Lower leg skin (tissue), 4 donors: ENCODE measurements at regions of chr10 and their contacts with region 1.

Region 1: DNA sequence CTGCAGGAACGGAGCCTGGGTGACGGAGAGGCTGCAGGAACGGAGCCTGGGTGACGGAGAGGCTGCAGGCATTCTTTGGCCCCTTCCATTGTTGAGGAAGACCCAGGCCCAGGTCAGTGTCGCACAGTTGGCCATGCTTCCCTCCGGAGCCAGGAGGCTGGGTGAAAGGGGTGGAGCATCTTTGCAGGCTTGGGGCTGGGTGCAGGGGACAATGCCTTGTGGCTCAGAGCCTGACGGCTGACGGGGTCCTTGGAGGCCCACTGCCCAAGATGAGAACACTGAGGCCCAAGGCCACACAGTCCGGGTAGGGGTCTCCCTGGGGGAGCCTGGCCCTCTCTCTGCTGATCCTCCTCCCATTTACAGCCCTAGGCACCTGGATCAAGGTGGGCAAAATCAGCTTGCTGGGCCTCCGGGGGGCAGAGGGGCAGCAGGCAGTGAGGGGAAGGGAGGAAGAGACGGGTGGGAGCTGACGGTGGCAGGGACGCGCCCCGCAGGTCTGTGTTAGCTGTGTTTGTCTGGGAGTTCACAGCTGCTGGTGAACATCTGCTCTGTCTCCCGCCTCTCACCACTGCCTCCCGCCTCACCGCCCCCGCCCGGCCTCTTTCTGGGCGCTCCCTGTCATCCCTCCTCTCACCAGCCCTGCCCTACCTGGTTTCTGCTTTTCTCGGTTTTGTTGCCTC is 30.6 kb upstream of the PCBD1 start:
- DNase-seq: no peak
- H3K4me3 ChIP-seq: no peak overlapping the region
- CTCF ChIP-seq: no peak
- POLR2A ChIP-seq: no peak

Region 2: DNA sequence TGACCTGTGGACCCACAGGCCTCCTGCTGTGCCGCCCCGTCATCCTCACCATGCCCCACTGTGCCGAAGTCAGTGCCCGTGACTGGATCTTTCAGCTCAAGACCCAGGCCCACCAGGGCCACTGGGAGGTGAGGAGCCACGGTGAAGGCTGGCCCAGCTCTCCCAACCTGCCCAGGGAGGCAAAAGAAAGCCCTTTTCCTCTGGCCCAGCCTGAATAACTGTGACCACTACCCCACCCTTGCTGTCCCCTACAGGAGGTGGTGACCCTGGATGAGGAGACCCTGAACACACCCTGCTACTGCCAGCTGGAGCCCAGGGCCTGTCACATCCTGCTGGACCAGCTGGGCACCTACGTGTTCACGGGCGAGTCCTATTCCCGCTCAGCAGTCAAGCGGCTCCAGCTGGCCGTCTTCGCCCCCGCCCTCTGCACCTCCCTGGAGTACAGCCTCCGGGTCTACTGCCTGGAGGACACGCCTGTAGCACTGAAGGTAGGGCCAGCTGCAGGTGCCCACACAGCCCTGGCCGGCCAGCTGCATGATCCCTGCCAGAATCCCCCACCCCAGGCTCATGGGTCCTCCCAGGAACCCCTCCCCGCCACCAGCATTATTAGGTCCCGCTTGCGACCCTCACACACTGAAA is 374.6 kb after region 1 on chr10:
- intact Hi-C with region 1: loop called (anchors 5 kb)
- DNase-seq: no peak
- H3K4me3 ChIP-seq: no peak overlapping the region
- CTCF ChIP-seq: no peak
- POLR2A ChIP-seq: no peak